ENCODE measurements at regions of chr3 and their contacts with region 1.

Region 1: DNA sequence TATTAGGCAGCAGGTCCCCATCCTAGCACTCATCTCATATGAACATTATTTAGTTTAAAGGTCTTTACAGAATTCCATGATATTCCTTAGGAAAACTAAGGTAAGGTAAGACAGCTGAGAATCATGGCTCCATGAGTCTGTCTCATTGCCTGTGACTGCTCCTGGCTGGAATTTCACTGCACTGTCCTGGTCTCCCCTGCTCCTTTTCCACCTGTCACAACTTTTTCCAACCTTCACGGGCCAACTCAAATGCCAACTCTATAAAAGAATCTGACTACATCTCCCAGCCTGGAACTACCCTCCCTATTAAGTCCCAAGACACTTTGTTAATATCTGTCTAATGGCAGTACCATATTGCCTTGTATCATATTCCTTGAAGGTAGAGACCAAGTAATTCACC is 7.6 kb downstream of the CNBP start:
- DNase-seq: no peak
- H3K4me3 ChIP-seq: no peak overlapping the region
- H3K27ac ChIP-seq: no peak overlapping the region
- H3K4me1 ChIP-seq: peaks cover 20% of the 10 kb centered on the region
- H3K27me3 ChIP-seq: no peaks in the 10 kb centered on the region
- CTCF ChIP-seq: no peak
- EP300 ChIP-seq: no peak
- POLR2A ChIP-seq: no peak

Region 2: DNA sequence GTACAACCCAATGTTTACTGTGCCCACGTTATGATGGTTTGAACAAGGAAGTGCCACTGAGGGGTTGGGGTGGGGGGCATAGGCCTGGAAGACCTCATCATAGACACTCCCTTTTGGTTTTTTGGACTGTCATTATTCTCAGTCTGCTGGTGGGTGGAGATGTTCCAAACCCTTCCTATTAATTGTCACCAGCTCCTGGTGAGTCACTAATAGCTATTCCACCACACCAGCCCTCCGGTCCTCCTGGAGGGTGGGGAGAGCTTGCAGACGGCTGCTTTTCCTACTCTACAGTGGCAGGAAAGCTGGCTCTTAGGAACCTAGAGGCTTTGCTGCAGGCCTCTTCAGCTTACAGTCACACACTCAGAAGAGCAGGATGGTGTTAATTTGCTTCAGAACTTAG is 64.4 kb after region 1 on chr3:
- intact Hi-C with region 1: loop called in 1 of 4 experiments (anchors 5 kb)
- DNase-seq: no peak
- H3K4me3 ChIP-seq: no peak overlapping the region
- H3K27ac ChIP-seq: no peak overlapping the region
- H3K4me1 ChIP-seq: no peaks in the 10 kb centered on the region
- H3K27me3 ChIP-seq: no peaks in the 10 kb centered on the region
- CTCF ChIP-seq: no peak
- EP300 ChIP-seq: no peak
- POLR2A ChIP-seq: no peak

Measured in ovary (tissue), 10 donors.